CD8-positive, alpha-beta T cell (primary cell): ENCODE measurements at regions of chr17 and their contacts with region 1.

Region 1: DNA sequence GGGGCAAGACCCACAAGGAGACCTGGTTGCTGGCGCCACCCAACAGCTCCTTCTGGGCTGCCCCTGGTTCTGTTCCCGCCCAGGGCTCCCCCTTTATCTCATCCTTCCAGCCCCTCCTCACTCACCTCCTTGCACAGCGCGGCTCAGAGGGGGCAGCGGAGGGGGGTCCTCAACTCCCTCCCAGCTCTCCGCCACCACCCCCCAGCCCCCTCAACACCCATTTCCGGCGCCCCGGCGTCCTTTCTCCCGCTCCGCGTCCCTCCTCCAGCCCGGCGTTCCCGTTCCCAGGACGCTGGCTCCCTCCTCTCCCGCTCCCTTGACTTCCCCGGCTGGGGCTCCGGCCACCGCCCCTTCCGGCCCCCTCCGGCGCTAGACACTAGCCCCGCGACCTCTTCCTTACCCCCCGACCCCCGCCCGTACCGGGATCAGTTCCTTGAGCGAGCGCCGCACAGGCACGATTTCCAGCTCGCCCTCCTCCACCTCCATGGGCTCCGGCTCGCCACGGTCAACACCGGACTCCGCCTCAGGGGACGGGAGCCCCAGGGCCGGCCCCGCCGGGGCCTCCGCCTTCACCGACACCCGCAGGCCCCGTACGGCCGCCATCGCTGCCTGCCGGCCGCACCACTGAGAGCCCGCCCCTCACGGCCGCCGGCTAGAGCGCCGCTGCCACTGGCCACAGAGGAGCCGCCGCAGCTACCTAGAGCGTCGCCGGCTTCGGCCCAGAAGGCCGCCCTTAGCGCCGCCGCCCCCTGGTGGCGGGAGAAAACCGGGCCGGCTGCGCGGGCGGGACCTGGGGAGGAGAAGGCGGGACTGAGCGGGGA is at the start of gene NCBP3:
- DNase-seq: peak; percentile 80 to 95 (median 91)
- ATAC-seq: peak; percentile 94
- H3K4me3 ChIP-seq: peak within 1 kb of the TSS; percentile 84 to 99
- H3K4me3 Mint-ChIP-seq: peak within 1 kb of the TSS; percentile 93
- H3K27ac ChIP-seq: peak within 1 kb of the TSS; percentile 77 to 87
- H3K27ac Mint-ChIP-seq: peak within 1 kb of the TSS; percentile 89
- H3K4me1 ChIP-seq: peaks cover 14% of the 10 kb centered on the region
- H3K4me1 Mint-ChIP-seq: peaks cover 29% of the 10 kb centered on the region
- H3K27me3 ChIP-seq: no peaks in the 10 kb centered on the region
- H3K27me3 Mint-ChIP-seq: peaks cover 2% of the 10 kb centered on the region
- CTCF ChIP-seq: peak; percentile 88
- total RNA-seq, gene NCBP3: 28.4 to 35.3 TPM

Region 2: DNA sequence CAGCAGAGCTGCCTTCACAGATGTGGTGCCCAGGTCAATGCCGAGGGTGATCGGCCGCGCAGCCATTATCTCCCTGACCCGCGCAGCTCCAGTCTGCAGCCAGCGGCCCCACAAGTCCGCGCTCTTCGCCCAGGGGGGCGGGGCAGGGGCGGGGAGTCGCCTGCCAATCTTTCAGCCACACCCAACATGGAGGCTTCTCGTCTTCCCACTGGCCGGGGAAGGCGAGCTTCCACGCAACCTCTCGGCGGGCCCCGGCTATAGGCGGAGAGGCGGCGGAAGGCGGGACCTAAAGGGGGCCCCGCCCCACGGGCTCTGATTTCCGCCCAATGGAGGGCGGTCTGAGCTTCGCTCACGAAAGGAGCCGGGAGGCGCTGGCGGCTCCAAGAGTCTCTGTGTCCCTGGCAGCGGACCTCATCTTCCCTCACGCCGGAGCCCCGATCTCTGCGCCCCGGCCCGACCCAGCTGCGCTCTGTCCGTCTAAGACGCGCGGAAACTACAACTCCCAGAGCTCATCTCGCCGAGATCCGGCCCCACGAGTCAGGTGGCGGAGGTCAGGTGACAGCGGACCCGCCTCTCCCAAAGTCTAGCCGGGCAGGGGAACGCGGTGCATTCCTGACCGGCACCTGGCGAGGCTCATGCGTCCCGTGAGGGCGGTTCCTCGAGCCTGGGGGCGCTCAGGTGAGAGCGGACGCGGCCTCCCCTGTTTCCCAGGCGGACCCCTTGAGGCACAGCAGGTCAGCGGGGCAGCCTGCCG is 209.5 kb before region 1 on chr17 and contains the starts of genes CTNS and SHPK:
- CTCF ChIA-PET with region 1: no interaction called
- POLR2A ChIA-PET with region 1: interaction called, 10 read pairs
- intact Hi-C with region 1: loop called in 1 of 2 experiments (anchors 1 kb)
- DNase-seq: peak; percentile 86 to 96 (median 94)
- ATAC-seq: peak; percentile 98
- H3K4me3 ChIP-seq: peak within 1 kb of the TSS; percentile 93 to 94
- H3K4me3 Mint-ChIP-seq: peak within 1 kb of the TSS; percentile 97
- H3K27ac ChIP-seq: peak within 1 kb of the TSS; percentile 90 to 99
- H3K27ac Mint-ChIP-seq: peak within 1 kb of the TSS; percentile 99
- H3K4me1 ChIP-seq: peaks cover 8% of the 10 kb centered on the region
- H3K4me1 Mint-ChIP-seq: peaks cover 26% of the 10 kb centered on the region
- H3K27me3 ChIP-seq: no peaks in the 10 kb centered on the region
- H3K27me3 Mint-ChIP-seq: no peaks in the 10 kb centered on the region
- CTCF ChIP-seq: no peak
- total RNA-seq, gene CTNS: 3.1 to 4.2 TPM
- total RNA-seq, gene SHPK: 2.4 to 3.0 TPM

Region 3: DNA sequence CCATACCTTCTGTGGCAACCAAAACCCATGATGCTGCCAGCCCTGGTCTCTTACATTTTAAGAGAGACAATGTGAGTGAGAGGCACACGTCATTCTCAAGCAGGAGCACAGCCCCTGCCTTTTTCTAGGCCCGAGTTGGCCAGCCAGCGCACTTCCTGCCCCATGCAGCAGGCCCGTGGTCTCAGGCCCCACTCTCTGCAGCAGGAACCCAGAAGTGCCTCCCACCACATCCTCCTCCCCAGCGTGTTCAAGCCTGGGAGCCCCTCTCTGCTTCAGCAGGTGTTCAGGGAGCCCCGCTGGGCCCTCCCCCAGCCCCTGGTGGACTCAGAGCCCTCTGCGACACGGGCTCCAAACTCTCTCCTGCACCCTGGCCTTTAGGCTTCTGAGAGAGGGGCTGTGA is 75.4 kb before region 1 on chr17:
- CTCF ChIA-PET with region 1: interaction called, 5 read pairs
- POLR2A ChIA-PET with region 1: interaction called, 7 read pairs
- intact Hi-C with region 1: loop called (anchors 1 kb)
- DNase-seq: peak; percentile 30 to 88 (median 73)
- ATAC-seq: peak; percentile 73
- H3K4me3 ChIP-seq: no peak overlapping the region
- H3K4me3 Mint-ChIP-seq: peak overlapping the region; percentile 68
- H3K27ac ChIP-seq: peak overlapping the region; percentile 57 to 61
- H3K27ac Mint-ChIP-seq: peak overlapping the region; percentile 95
- H3K4me1 ChIP-seq: peaks cover 66% of the 10 kb centered on the region
- H3K4me1 Mint-ChIP-seq: peaks cover 64% of the 10 kb centered on the region
- H3K27me3 ChIP-seq: no peaks in the 10 kb centered on the region
- H3K27me3 Mint-ChIP-seq: no peaks in the 10 kb centered on the region
- CTCF ChIP-seq: no peak

Region 4: DNA sequence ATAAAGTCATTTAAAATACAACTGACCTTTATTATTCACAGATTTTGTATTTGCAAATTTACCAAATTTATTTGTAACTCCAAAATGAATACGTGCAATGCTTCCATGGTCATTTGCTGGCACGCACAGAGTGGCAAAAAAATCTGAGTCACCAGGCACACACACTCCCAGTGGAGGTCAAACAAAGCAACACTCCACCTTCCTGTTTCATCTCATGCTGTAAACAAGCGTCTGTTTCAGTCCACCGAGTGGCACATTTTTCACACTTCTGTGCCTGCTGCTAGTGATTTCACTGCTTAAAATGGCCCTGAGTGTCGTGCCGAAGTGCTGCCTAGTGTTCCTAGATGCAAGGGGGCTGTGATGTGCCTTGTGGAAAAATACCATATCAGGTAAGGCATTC is 27.0 kb before region 1 on chr17:
- CTCF ChIA-PET with region 1: no interaction called
- POLR2A ChIA-PET with region 1: no interaction called
- intact Hi-C with region 1: no loop called
- DNase-seq: no peak
- ATAC-seq: no peak
- H3K4me3 ChIP-seq: no peak overlapping the region
- H3K4me3 Mint-ChIP-seq: no peak overlapping the region
- H3K27ac ChIP-seq: no peak overlapping the region
- H3K27ac Mint-ChIP-seq: no peak overlapping the region
- H3K4me1 ChIP-seq: no peaks in the 10 kb centered on the region
- H3K4me1 Mint-ChIP-seq: no peaks in the 10 kb centered on the region
- H3K27me3 ChIP-seq: no peaks in the 10 kb centered on the region
- H3K27me3 Mint-ChIP-seq: no peaks in the 10 kb centered on the region
- CTCF ChIP-seq: no peak

Region 5: GRCh38 chr17:3965118-3965803 is 119.4 kb after region 1 on chr17:
- CTCF ChIA-PET with region 1: interaction called, 5 read pairs
- POLR2A ChIA-PET with region 1: interaction called, 4 read pairs
- intact Hi-C with region 1: loop called (anchors 1 to 2 kb)
- DNase-seq: peak; percentile 33 to 81 (median 73)
- ATAC-seq: peak; percentile 51
- H3K4me3 ChIP-seq: peak overlapping the region; percentile 71 to 83
- H3K4me3 Mint-ChIP-seq: peak overlapping the region; percentile 91
- H3K27ac ChIP-seq: peak overlapping the region; percentile 76 to 77
- H3K27ac Mint-ChIP-seq: peak overlapping the region; percentile 94
- H3K4me1 ChIP-seq: peaks cover 39% of the 10 kb centered on the region
- H3K4me1 Mint-ChIP-seq: peaks cover 40% of the 10 kb centered on the region
- H3K27me3 ChIP-seq: no peaks in the 10 kb centered on the region
- H3K27me3 Mint-ChIP-seq: no peaks in the 10 kb centered on the region
- CTCF ChIP-seq: no peak

Region 6: GRCh38 chr17:4263282-4264215 is 417.7 kb after region 1 on chr17 and contains the start of gene ANKFY1:
- CTCF ChIA-PET with region 1: no interaction called
- POLR2A ChIA-PET with region 1: no interaction called
- intact Hi-C with region 1: loop called in 1 of 2 experiments (anchors 5 kb)
- DNase-seq: peak; percentile 95 to 98 (median 97)
- ATAC-seq: peak; percentile 95
- H3K4me3 ChIP-seq: peak within 1 kb of the TSS; percentile 86 to 99
- H3K4me3 Mint-ChIP-seq: peak within 1 kb of the TSS; percentile 90
- H3K27ac ChIP-seq: peak within 1 kb of the TSS; percentile 81 to 88
- H3K27ac Mint-ChIP-seq: peak within 1 kb of the TSS; percentile 91
- H3K4me1 ChIP-seq: peaks cover 21% of the 10 kb centered on the region
- H3K4me1 Mint-ChIP-seq: peaks cover 40% of the 10 kb centered on the region
- H3K27me3 ChIP-seq: no peaks in the 10 kb centered on the region
- H3K27me3 Mint-ChIP-seq: no peaks in the 10 kb centered on the region
- CTCF ChIP-seq: no peak
- total RNA-seq, gene ANKFY1: 26.2 to 28.6 TPM